Left lung (tissue), 14 donors: ENCODE measurements at regions of chr3 and their contacts with region 1.

Region 1: GRCh38 chr3:53195602-53196574 is 34.9 kb downstream of the PRKCD start:
- DNase-seq: peak in 3 of 4 donors; percentile 49 to 91 (median 69)
- ATAC-seq: peak; percentile 71
- H3K4me3 ChIP-seq: no peak overlapping the region
- H3K27ac ChIP-seq: no peak overlapping the region
- H3K4me1 ChIP-seq: peaks cover 8 to 38% of the 10 kb centered on the region in 2 donors
- H3K27me3 ChIP-seq: no peaks in the 10 kb centered on the region
- CTCF ChIP-seq: peak; percentile 95 to 100

Region 2: GRCh38 chr3:53092942-53093341 is 102.9 kb before region 1 on chr3:
- intact Hi-C with region 1: no loop called
- DNase-seq: no peak
- ATAC-seq: peak; percentile 35
- H3K4me3 ChIP-seq: no peak overlapping the region
- H3K27ac ChIP-seq: no peak overlapping the region
- H3K4me1 ChIP-seq: peaks cover 0 to 3% of the 10 kb centered on the region in 2 donors
- H3K27me3 ChIP-seq: no peaks in the 10 kb centered on the region
- CTCF ChIP-seq: no peak

Region 3: GRCh38 chr3:53114412-53115074 is 81.3 kb before region 1 on chr3:
- intact Hi-C with region 1: loop called in 1 of 2 experiments (anchors 5 kb)
- DNase-seq: no peak
- ATAC-seq: no peak
- H3K4me3 ChIP-seq: no peak overlapping the region
- H3K27ac ChIP-seq: peak overlapping the region in 1 of 2 donors; percentile 81
- H3K4me1 ChIP-seq: peaks cover 5 to 38% of the 10 kb centered on the region in 2 donors
- H3K27me3 ChIP-seq: no peaks in the 10 kb centered on the region
- CTCF ChIP-seq: no peak

Region 4: GRCh38 chr3:53130179-53131061 is 65.5 kb before region 1 on chr3 and contains the start of gene RFT1:
- intact Hi-C with region 1: loop called in 1 of 2 experiments (anchors 10 kb)
- DNase-seq: peak; percentile 97
- ATAC-seq: peak; percentile 89
- H3K4me3 ChIP-seq: peak within 1 kb of the TSS; percentile 76 to 91
- H3K27ac ChIP-seq: peak within 1 kb of the TSS; percentile 88 to 91
- H3K4me1 ChIP-seq: peaks cover 10 to 50% of the 10 kb centered on the region in 2 donors
- H3K27me3 ChIP-seq: no peaks in the 10 kb centered on the region
- CTCF ChIP-seq: peak in 1 of 2 donors; percentile 18
- polyA plus RNA-seq, gene RFT1: 23.2 to 24.5 (median 24.1) TPM

Region 5: GRCh38 chr3:53269888-53270880 is 74.3 kb after region 1 on chr3:
- intact Hi-C with region 1: no loop called
- DNase-seq: peak; percentile 54 to 93 (median 88)
- ATAC-seq: peak; percentile 93
- H3K4me3 ChIP-seq: peak overlapping the region in 1 of 2 donors; percentile 12
- H3K27ac ChIP-seq: peak overlapping the region; percentile 89 to 92
- H3K4me1 ChIP-seq: peaks cover 16 to 37% of the 10 kb centered on the region in 2 donors
- H3K27me3 ChIP-seq: no peaks in the 10 kb centered on the region
- CTCF ChIP-seq: no peak